CD8-positive, alpha-beta T cell (primary cell): ENCODE measurements at regions of chr2 and their contacts with region 1.

Region 1: DNA sequence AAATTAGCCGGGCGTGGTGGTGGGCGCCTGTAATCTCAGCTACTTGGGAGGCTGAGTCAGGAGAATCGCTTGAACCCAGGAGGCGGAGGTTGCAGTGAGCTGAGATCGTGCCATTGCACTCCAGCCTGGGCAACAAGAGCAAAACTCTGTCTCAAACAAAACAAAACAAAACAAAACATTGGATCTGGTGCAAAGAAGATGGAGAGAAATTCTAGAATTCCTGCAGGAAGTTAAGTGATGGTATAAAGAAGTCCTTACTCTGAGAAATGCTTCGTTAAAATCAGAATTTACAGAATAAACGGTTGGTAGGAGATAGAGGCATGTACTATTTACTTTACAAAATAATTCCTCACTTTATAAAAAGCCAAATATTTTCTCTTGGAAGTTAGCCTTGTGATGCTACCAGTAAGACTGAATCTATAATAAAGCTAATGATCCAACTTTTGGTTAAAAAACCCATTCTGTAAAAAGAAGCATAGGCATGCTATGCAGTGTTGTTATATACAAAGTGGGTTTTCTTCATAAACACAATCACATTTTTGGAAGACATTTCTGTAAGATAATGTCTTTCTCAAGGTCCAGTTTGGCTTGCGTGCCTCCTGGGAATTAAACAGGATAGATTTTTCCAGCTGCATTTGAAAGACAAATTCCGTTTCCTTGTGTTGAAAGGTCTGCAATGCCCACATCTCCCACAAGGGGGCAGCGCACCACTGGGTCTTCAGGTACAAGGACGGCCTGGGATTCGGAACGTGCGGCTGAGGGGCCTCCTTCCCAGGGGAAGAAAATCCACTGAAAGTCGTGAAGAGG is 35.6 kb upstream of the PNO1 start:
- DNase-seq: peak; percentile 48 to 85 (median 78)
- ATAC-seq: peak; percentile 69
- H3K4me3 ChIP-seq: no peak overlapping the region
- H3K4me3 Mint-ChIP-seq: peak overlapping the region; percentile 35
- H3K27ac ChIP-seq: no peak overlapping the region
- H3K27ac Mint-ChIP-seq: no peak overlapping the region
- H3K4me1 ChIP-seq: peaks cover 4% of the 10 kb centered on the region
- H3K4me1 Mint-ChIP-seq: peaks cover 3% of the 10 kb centered on the region
- H3K27me3 ChIP-seq: no peaks in the 10 kb centered on the region
- H3K27me3 Mint-ChIP-seq: no peaks in the 10 kb centered on the region
- CTCF ChIP-seq: peak; percentile 99

Region 2: GRCh38 chr2:68062680-68063387 is 59.2 kb before region 1 on chr2 and contains the start of gene C1D:
- CTCF ChIA-PET with region 1: interaction called, 4 read pairs
- POLR2A ChIA-PET with region 1: no interaction called
- intact Hi-C with region 1: loop called in 1 of 2 experiments (anchors 1 kb)
- DNase-seq: peak; percentile 88 to 96 (median 93)
- ATAC-seq: peak; percentile 89
- H3K4me3 ChIP-seq: peak within 1 kb of the TSS; percentile 66 to 91
- H3K4me3 Mint-ChIP-seq: peak within 1 kb of the TSS; percentile 96
- H3K27ac ChIP-seq: peak within 1 kb of the TSS; percentile 95 to 96
- H3K27ac Mint-ChIP-seq: peak within 1 kb of the TSS; percentile 98
- H3K4me1 ChIP-seq: peaks cover 30% of the 10 kb centered on the region
- H3K4me1 Mint-ChIP-seq: peaks cover 48% of the 10 kb centered on the region
- H3K27me3 ChIP-seq: no peaks in the 10 kb centered on the region
- H3K27me3 Mint-ChIP-seq: peaks cover 4% of the 10 kb centered on the region
- CTCF ChIP-seq: no peak
- total RNA-seq, gene C1D: 30.1 to 32.7 TPM

Region 3: GRCh38 chr2:68141875-68142274 is 19.8 kb after region 1 on chr2:
- CTCF ChIA-PET with region 1: interaction called, 16 read pairs
- POLR2A ChIA-PET with region 1: no interaction called
- intact Hi-C with region 1: no loop called
- DNase-seq: no peak
- ATAC-seq: no peak
- H3K4me3 ChIP-seq: no peak overlapping the region
- H3K4me3 Mint-ChIP-seq: no peak overlapping the region
- H3K27ac ChIP-seq: no peak overlapping the region
- H3K27ac Mint-ChIP-seq: no peak overlapping the region
- H3K4me1 ChIP-seq: no peaks in the 10 kb centered on the region
- H3K4me1 Mint-ChIP-seq: peaks cover 1% of the 10 kb centered on the region
- H3K27me3 ChIP-seq: no peaks in the 10 kb centered on the region
- H3K27me3 Mint-ChIP-seq: no peaks in the 10 kb centered on the region
- CTCF ChIP-seq: no peak

Region 4: GRCh38 chr2:68185541-68186164 is 63.6 kb after region 1 on chr2:
- CTCF ChIA-PET with region 1: interaction called, 17 read pairs
- POLR2A ChIA-PET with region 1: no interaction called
- intact Hi-C with region 1: loop called (anchors 2 to 5 kb)
- DNase-seq: peak; percentile 11 to 80 (median 57)
- ATAC-seq: peak; percentile 60
- H3K4me3 ChIP-seq: no peak overlapping the region
- H3K4me3 Mint-ChIP-seq: no peak overlapping the region
- H3K27ac ChIP-seq: no peak overlapping the region
- H3K27ac Mint-ChIP-seq: no peak overlapping the region
- H3K4me1 ChIP-seq: peaks cover 7% of the 10 kb centered on the region
- H3K4me1 Mint-ChIP-seq: peaks cover 34% of the 10 kb centered on the region
- H3K27me3 ChIP-seq: no peaks in the 10 kb centered on the region
- H3K27me3 Mint-ChIP-seq: no peaks in the 10 kb centered on the region
- CTCF ChIP-seq: peak; percentile 81

Region 5: GRCh38 chr2:68295516-68295915 is 173.4 kb after region 1 on chr2:
- CTCF ChIA-PET with region 1: interaction called, 62 read pairs
- POLR2A ChIA-PET with region 1: no interaction called
- intact Hi-C with region 1: no loop called
- DNase-seq: peak in 1 of 9 experiments; percentile 7
- ATAC-seq: no peak
- H3K4me3 ChIP-seq: no peak overlapping the region
- H3K4me3 Mint-ChIP-seq: no peak overlapping the region
- H3K27ac ChIP-seq: no peak overlapping the region
- H3K27ac Mint-ChIP-seq: no peak overlapping the region
- H3K4me1 ChIP-seq: no peaks in the 10 kb centered on the region
- H3K4me1 Mint-ChIP-seq: no peaks in the 10 kb centered on the region
- H3K27me3 ChIP-seq: no peaks in the 10 kb centered on the region
- H3K27me3 Mint-ChIP-seq: peaks cover 6% of the 10 kb centered on the region
- CTCF ChIP-seq: no peak

Region 6: DNA sequence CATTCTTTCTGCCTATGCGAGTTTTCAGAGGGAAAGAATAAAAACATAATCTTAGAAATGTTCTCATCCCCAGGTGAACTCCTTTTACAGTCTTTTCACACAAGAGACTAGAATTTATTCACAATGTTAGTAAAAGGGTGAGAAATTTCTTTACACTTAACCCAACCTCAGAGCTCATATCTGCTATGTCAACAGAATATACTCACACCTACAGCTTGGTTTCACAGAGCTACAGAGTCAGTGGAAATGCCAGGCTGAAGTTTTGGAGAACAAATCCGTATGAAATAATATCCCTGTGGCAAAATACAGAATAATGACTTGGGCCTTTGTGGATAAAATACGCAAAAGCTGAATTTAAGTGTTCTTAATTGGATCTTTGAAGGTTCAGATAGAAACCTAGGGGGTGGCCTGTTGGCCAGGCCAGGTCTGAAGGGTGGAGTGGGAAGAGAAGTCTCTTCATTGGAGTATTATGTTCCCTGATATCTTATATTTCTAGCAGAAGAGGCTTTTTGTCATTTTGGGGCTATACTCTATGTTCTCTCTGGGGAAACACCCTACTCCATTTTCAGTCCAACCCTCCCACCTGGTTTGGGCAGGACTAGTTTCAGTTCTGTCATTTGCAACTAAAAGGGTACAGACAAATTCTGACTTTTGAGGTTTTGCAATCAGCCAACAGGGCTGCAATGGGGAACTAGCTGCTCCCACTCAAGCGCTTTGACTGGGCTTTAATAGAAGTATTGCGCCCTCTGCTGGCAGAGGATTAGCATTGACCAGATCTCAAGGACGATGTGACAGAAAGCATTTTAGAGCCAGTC is 319.3 kb after region 1 on chr2:
- CTCF ChIA-PET with region 1: interaction called, 31 read pairs
- POLR2A ChIA-PET with region 1: no interaction called
- intact Hi-C with region 1: loop called (anchors 1 kb)
- DNase-seq: peak; percentile 60 to 95 (median 85)
- ATAC-seq: peak; percentile 91
- H3K4me3 ChIP-seq: no peak overlapping the region
- H3K4me3 Mint-ChIP-seq: peak overlapping the region; percentile 49
- H3K27ac ChIP-seq: peak overlapping the region in 1 of 2 experiments; percentile 83
- H3K27ac Mint-ChIP-seq: peak overlapping the region; percentile 93
- H3K4me1 ChIP-seq: peaks cover 6% of the 10 kb centered on the region
- H3K4me1 Mint-ChIP-seq: peaks cover 16% of the 10 kb centered on the region
- H3K27me3 ChIP-seq: no peaks in the 10 kb centered on the region
- H3K27me3 Mint-ChIP-seq: no peaks in the 10 kb centered on the region
- CTCF ChIP-seq: peak; percentile 92